ENCODE measurements at regions of chr14 and their contacts with region 1.

Region 1: GRCh38 chr14:22466491-22466890 is 122.5 kb downstream of the DAD1 start:
- DNase-seq: no peak
- ATAC-seq: peak; percentile 71
- H3K4me3 ChIP-seq: no peak overlapping the region
- H3K27ac ChIP-seq: peak overlapping the region; percentile 86
- H3K4me1 ChIP-seq: peaks cover 52% of the 10 kb centered on the region
- H3K27me3 ChIP-seq: no peaks in the 10 kb centered on the region
- CTCF ChIP-seq: 0 out of 6 replicates have a peak, but pooled peaks of 1 of the 3 experiments have one; percentile 12
- EP300 ChIP-seq: no peak
- POLR2A ChIP-seq: no peak
- RAD21 ChIP-seq: peak; percentile 40; the same call in 1 of the 2 replicates

Region 2: GRCh38 chr14:22380571-22381407 is 85.7 kb before region 1 on chr14:
- CTCF ChIA-PET with region 1: interaction called, 142 read pairs
- POLR2A ChIA-PET with region 1: interaction called, 20 read pairs
- RAD21 ChIA-PET with region 1: interaction called, 272 read pairs
- SMC1A ChIA-PET with region 1: interaction called, 912 read pairs
- in situ Hi-C with region 1: no loop called
- intact Hi-C with region 1: no loop called
- DNase-seq: no peak
- ATAC-seq: no peak
- H3K4me3 ChIP-seq: no peak overlapping the region
- H3K27ac ChIP-seq: no peak overlapping the region
- H3K4me1 ChIP-seq: peaks cover 39% of the 10 kb centered on the region
- H3K27me3 ChIP-seq: no peaks in the 10 kb centered on the region
- CTCF ChIP-seq: no peak
- EP300 ChIP-seq: no peak
- POLR2A ChIP-seq: no peak
- RAD21 ChIP-seq: no peak

Region 3: GRCh38 chr14:22400655-22401259 is 65.7 kb before region 1 on chr14:
- CTCF ChIA-PET with region 1: interaction called, 411 read pairs
- POLR2A ChIA-PET with region 1: interaction called, 3 read pairs
- RAD21 ChIA-PET with region 1: interaction called, 13 read pairs
- SMC1A ChIA-PET with region 1: interaction called, 912 read pairs
- in situ Hi-C with region 1: no loop called
- intact Hi-C with region 1: no loop called
- DNase-seq: no peak
- ATAC-seq: no peak
- H3K4me3 ChIP-seq: no peak overlapping the region
- H3K27ac ChIP-seq: no peak overlapping the region
- H3K4me1 ChIP-seq: no peaks in the 10 kb centered on the region
- H3K27me3 ChIP-seq: peaks cover 0 to 3% of the 10 kb centered on the region in 2 experiments; a peak in 2 of 4 replicates
- CTCF ChIP-seq: no peak
- EP300 ChIP-seq: no peak
- POLR2A ChIP-seq: no peak
- RAD21 ChIP-seq: no peak

Region 4: GRCh38 chr14:22418631-22419030 is 47.9 kb before region 1 on chr14:
- CTCF ChIA-PET with region 1: interaction called, 16 read pairs
- POLR2A ChIA-PET with region 1: interaction called, 3 read pairs
- RAD21 ChIA-PET with region 1: interaction called, 7 read pairs
- SMC1A ChIA-PET with region 1: interaction called, 35 read pairs
- in situ Hi-C with region 1: no loop called
- intact Hi-C with region 1: loop called (anchors 1 kb)
- DNase-seq: peak; percentile 48
- ATAC-seq: peak; percentile 88
- H3K4me3 ChIP-seq: no peak overlapping the region
- H3K27ac ChIP-seq: no peak overlapping the region; the same call in 1 of the 2 replicates
- H3K4me1 ChIP-seq: peaks cover 13% of the 10 kb centered on the region
- H3K27me3 ChIP-seq: no peaks in the 10 kb centered on the region
- CTCF ChIP-seq: no peak
- EP300 ChIP-seq: no peak
- POLR2A ChIP-seq: no peak
- RAD21 ChIP-seq: no peak

Region 5: GRCh38 chr14:22432348-22432976 is 34.0 kb before region 1 on chr14:
- CTCF ChIA-PET with region 1: interaction called, 39 read pairs
- POLR2A ChIA-PET with region 1: no interaction called
- RAD21 ChIA-PET with region 1: interaction called, 19 read pairs
- SMC1A ChIA-PET with region 1: interaction called, 18 read pairs
- in situ Hi-C with region 1: no loop called
- intact Hi-C with region 1: no loop called
- DNase-seq: no peak
- ATAC-seq: peak; percentile 83
- H3K4me3 ChIP-seq: no peak overlapping the region
- H3K27ac ChIP-seq: no peak overlapping the region
- H3K4me1 ChIP-seq: peaks cover 19% of the 10 kb centered on the region
- H3K27me3 ChIP-seq: no peaks in the 10 kb centered on the region
- CTCF ChIP-seq: no peak
- EP300 ChIP-seq: no peak
- POLR2A ChIP-seq: no peak
- RAD21 ChIP-seq: no peak

Region 6: GRCh38 chr14:22448905-22449599 is 17.4 kb before region 1 on chr14:
- CTCF ChIA-PET with region 1: interaction called, 27 read pairs
- POLR2A ChIA-PET with region 1: interaction called, 26 read pairs
- RAD21 ChIA-PET with region 1: interaction called, 37 read pairs
- SMC1A ChIA-PET with region 1: interaction called, 152 read pairs
- in situ Hi-C with region 1: no loop called
- intact Hi-C with region 1: loop called (anchors 2 kb)
- DNase-seq: no peak
- ATAC-seq: peak; percentile 74
- H3K4me3 ChIP-seq: no peak overlapping the region
- H3K27ac ChIP-seq: peak overlapping the region; percentile 83
- H3K4me1 ChIP-seq: peaks cover 25% of the 10 kb centered on the region
- H3K27me3 ChIP-seq: no peaks in the 10 kb centered on the region
- CTCF ChIP-seq: no peak
- EP300 ChIP-seq: 0 out of 4 replicates have a peak, but pooled peaks of 1 of the 2 experiments have one; percentile 21
- POLR2A ChIP-seq: no peak
- RAD21 ChIP-seq: no peak

Region 7: GRCh38 chr14:22478670-22479069 is 12.2 kb after region 1 on chr14:
- CTCF ChIA-PET with region 1: interaction called, 3 read pairs
- POLR2A ChIA-PET with region 1: interaction called, 875 read pairs
- RAD21 ChIA-PET with region 1: interaction called, 13 read pairs
- SMC1A ChIA-PET with region 1: interaction called, 203 read pairs
- in situ Hi-C with region 1: no loop called
- intact Hi-C with region 1: no loop called
- DNase-seq: no peak
- ATAC-seq: peak; percentile 5; the same call in 1 of the 3 replicates
- H3K4me3 ChIP-seq: peak overlapping the region; percentile 66; the same call in 1 of the 2 replicates
- H3K27ac ChIP-seq: peak overlapping the region; percentile 98
- H3K4me1 ChIP-seq: peaks cover 71% of the 10 kb centered on the region
- H3K27me3 ChIP-seq: no peaks in the 10 kb centered on the region
- CTCF ChIP-seq: no peak
- EP300 ChIP-seq: 0 out of 4 replicates have a peak, but pooled peaks of 1 of the 2 experiments have one; percentile 1
- POLR2A ChIP-seq: no peak
- RAD21 ChIP-seq: no peak